ENCODE measurements at regions of chr15 and their contacts with region 1.

Region 1: GRCh38 chr15:78241007-78241406 is 6.6 kb upstream of the ACSBG1 start:
- DNase-seq: peak; percentile 81
- ATAC-seq: peak; percentile 98
- H3K4me3 ChIP-seq: no peak overlapping the region
- H3K27ac ChIP-seq: no peak overlapping the region
- H3K4me1 ChIP-seq: no peaks in the 10 kb centered on the region
- H3K27me3 ChIP-seq: no peaks in the 10 kb centered on the region
- CTCF ChIP-seq: peak; percentile 78

Region 2: GRCh38 chr15:78131295-78132061 is 109.5 kb before region 1 on chr15 and contains the start of gene CIB2:
- CTCF ChIA-PET with region 1: interaction called, 9 read pairs
- POLR2A ChIA-PET with region 1: no interaction called
- intact Hi-C with region 1: loop called (anchors 5 kb)
- DNase-seq: peak; percentile 56
- ATAC-seq: peak; percentile 58
- H3K4me3 ChIP-seq: peak within 1 kb of the TSS; percentile 62
- H3K27ac ChIP-seq: no peak within 1 kb of the TSS
- H3K4me1 ChIP-seq: peaks cover 42% of the 10 kb centered on the region
- H3K27me3 ChIP-seq: no peaks in the 10 kb centered on the region
- CTCF ChIP-seq: peak; percentile 57
- total RNA-seq, gene CIB2: 7.3 and 10.4 TPM in 2 replicates

Region 3: GRCh38 chr15:78149068-78149804 is 91.8 kb before region 1 on chr15 and contains the start of gene IDH3A:
- CTCF ChIA-PET with region 1: no interaction called
- POLR2A ChIA-PET with region 1: no interaction called
- intact Hi-C with region 1: no loop called
- DNase-seq: peak; percentile 98
- ATAC-seq: peak; percentile 91
- H3K4me3 ChIP-seq: peak within 1 kb of the TSS; percentile 81
- H3K27ac ChIP-seq: peak within 1 kb of the TSS; percentile 30
- H3K4me1 ChIP-seq: peaks cover 17% of the 10 kb centered on the region; the same call in 1 of the 2 replicates
- H3K27me3 ChIP-seq: no peaks in the 10 kb centered on the region
- CTCF ChIP-seq: no peak
- total RNA-seq, gene IDH3A: 55.0 and 78.8 TPM in 2 replicates

Region 4: DNA sequence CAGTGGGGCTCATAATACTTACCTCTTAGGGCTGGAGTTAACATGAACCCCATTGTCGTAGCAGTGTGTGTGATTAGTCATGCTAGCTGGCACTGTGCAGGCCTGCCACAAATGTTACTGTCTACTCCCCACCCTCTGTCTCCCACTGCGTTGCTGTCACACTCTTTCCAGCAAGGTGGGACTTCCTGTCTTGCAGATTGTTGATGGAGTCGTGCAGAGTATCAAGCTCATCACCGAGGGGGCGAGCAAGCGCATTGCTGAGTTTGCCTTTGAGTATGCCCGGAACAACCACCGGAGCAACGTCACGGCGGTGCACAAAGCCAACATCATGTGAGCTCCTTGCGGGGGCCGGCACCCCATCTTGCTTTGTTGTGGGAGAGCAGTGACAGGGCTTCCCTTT is 79.0 kb before region 1 on chr15:
- CTCF ChIA-PET with region 1: no interaction called
- POLR2A ChIA-PET with region 1: no interaction called
- intact Hi-C with region 1: no loop called
- DNase-seq: no peak
- ATAC-seq: no peak
- H3K4me3 ChIP-seq: no peak overlapping the region
- H3K27ac ChIP-seq: no peak overlapping the region
- H3K4me1 ChIP-seq: peaks cover under 1% of the 10 kb centered on the region; the same call in 1 of the 2 replicates
- H3K27me3 ChIP-seq: no peaks in the 10 kb centered on the region
- CTCF ChIP-seq: no peak

Region 5: GRCh38 chr15:78177447-78177873 is 63.5 kb before region 1 on chr15:
- CTCF ChIA-PET with region 1: interaction called, 5 read pairs
- POLR2A ChIA-PET with region 1: no interaction called
- intact Hi-C with region 1: loop called (anchors 1 kb)
- DNase-seq: peak; percentile 52
- ATAC-seq: peak; percentile 69
- H3K4me3 ChIP-seq: no peak overlapping the region
- H3K27ac ChIP-seq: no peak overlapping the region
- H3K4me1 ChIP-seq: no peaks in the 10 kb centered on the region
- H3K27me3 ChIP-seq: no peaks in the 10 kb centered on the region
- CTCF ChIP-seq: peak; percentile 91

Region 6: DNA sequence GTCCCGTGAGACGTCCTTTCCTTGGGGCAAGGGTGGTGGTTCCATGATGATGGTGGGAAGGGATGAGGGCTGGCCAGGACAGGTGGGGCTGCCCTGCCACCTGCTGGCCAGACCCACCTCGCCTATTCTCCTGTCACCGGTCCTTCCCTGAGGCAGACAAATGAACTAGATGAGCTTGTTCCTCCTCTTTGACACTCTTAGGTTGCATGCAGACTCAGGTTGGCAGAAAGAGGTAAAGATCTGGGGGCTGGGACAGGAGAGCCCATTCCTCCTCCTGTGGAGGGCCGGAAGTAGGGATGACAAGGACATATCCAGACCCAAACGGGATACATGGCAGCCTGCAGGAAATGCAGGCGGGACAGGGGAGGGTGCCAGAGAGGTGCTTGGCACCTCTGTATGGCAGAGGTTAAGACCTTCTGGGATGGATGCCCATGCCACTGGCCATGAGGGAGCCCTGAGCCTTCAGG is 45.2 kb before region 1 on chr15:
- CTCF ChIA-PET with region 1: no interaction called
- POLR2A ChIA-PET with region 1: no interaction called
- intact Hi-C with region 1: loop called (anchors 5 kb)
- DNase-seq: peak; percentile 54
- ATAC-seq: peak; percentile 86
- H3K4me3 ChIP-seq: no peak overlapping the region
- H3K27ac ChIP-seq: no peak overlapping the region
- H3K4me1 ChIP-seq: no peaks in the 10 kb centered on the region
- H3K27me3 ChIP-seq: no peaks in the 10 kb centered on the region
- CTCF ChIP-seq: peak; percentile 90